Activated T-helper 1 cell treated with anti-CD3 and anti-CD28 coated beads, Interleukin-12 subunit alpha, Interleukin-12 subunit beta, Interleukin-2, Interleukin-4 antibody, amounts not matched to agents 30 ng/mL and 10 ng/mL and 1 ng/mL, durations not matched to agents 14 hours and 24 hours and 36 hours (primary cell): ENCODE measurements at regions of chr1 and their contacts with region 1.

Region 1: GRCh38 chr1:59971464-59971911 is 44.9 kb upstream of the CYP2J2 start:
- DNase-seq: peak; percentile 15
- H3K4me3 Mint-ChIP-seq: no peak overlapping the region
- H3K27ac Mint-ChIP-seq: no peak overlapping the region
- H3K4me1 Mint-ChIP-seq: peaks cover 6% of the 10 kb centered on the region
- H3K27me3 Mint-ChIP-seq: peaks cover 12% of the 10 kb centered on the region

Region 2: GRCh38 chr1:60765204-60765603 is 793.7 kb after region 1 on chr1:
- intact Hi-C with region 1: loop called (anchors 10 kb)
- DNase-seq: no peak
- H3K4me3 Mint-ChIP-seq: no peak overlapping the region
- H3K27ac Mint-ChIP-seq: no peak overlapping the region
- H3K4me1 Mint-ChIP-seq: no peaks in the 10 kb centered on the region
- H3K27me3 Mint-ChIP-seq: no peaks in the 10 kb centered on the region

Region 3: DNA sequence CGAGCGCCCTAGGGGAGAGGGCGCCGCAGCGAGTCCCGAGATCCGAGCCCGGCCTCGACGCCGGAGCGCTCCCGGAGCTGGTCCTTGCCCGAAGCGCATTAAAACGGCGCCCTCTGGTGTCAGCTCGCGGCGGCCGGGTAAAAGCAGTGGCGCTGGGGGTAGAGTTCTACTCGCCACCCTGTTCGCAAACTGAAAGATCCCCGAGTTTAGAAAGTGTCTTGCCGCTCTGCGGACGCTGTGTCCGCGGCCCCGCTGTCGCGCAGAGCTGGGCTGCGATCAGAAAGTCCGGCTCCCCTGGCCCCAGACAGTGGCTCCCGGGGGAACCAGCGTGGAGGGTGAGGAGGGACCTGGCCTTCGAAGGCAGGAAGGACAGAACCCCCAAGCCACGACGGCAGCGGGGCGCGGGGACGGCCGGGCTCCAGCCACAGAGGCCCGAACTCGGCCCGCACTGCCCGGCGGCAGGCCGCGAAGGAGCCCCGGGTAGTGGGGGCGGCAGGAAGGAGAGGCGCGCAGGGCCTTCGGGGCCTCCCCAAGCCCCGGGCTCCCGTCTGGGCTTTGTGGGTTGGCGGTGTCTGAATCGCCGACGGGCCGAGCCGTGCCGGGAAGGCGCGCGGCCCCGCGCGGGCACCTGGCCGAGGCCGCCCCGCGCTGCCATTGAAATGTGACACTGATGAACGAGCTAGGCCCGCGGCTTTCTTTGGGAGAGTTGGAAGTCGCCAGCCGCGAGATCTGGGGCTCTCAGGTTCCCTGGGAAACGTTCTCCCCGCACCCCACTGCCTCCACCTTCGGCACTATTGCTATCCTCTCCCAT is 1071.7 kb after region 1 on chr1:
- intact Hi-C with region 1: loop called (anchors 5 kb)
- DNase-seq: peak; percentile 71
- H3K4me3 Mint-ChIP-seq: peak overlapping the region; percentile 48
- H3K27ac Mint-ChIP-seq: no peak overlapping the region
- H3K4me1 Mint-ChIP-seq: no peaks in the 10 kb centered on the region
- H3K27me3 Mint-ChIP-seq: peaks cover 45% of the 10 kb centered on the region

Region 4: DNA sequence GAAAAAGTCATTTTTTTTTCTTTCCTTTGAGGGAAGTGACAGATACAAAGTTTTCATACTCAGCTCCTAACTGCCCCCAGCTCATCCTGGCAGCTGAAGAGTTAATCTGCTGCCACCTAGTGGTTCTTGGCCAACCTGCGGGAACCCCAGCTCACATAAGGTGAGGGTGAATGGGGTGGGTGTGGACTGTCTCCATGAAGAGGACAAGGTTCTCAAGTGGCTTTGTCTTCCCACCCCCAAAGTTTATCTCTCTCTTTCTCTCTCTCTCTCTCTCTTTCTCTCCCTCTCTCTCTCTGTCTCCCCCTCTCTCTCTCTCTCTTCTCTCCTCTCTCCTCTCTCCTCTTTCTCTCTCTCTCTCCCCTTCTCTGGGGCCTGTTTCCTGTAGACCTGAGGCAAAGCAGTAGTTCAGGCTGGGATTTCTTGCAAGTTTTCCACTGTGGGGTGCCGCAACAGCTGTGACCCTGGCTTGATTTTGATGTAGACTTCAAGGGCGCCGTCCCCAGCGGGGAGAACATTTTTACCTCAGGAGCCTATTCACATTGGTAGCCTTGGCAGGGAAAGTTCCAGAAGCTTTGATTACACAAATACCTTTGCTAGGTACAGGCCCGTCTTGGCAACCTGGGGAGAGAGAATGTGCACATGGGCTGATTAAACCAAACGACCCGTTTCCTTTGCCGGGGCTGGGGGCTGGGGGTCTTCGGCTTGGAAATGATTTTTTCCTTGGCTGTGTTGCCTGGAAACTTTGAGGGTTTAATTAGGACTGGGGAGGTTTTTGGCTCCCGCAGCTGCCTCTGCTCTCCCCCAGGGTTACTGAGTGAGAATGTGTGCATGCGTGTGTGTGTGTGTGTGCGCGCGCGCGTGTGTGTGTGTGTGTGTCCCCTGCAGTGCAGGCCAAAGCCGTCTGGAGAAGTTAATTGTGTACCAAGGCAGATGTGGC is 1617.5 kb after region 1 on chr1:
- intact Hi-C with region 1: loop called (anchors 10 kb)
- DNase-seq: peak; percentile 37
- H3K4me3 Mint-ChIP-seq: no peak overlapping the region
- H3K27ac Mint-ChIP-seq: no peak overlapping the region
- H3K4me1 Mint-ChIP-seq: no peaks in the 10 kb centered on the region
- H3K27me3 Mint-ChIP-seq: peaks cover 18% of the 10 kb centered on the region

Region 5: GRCh38 chr1:61851849-61852669 is 1880.6 kb after region 1 on chr1:
- intact Hi-C with region 1: loop called (anchors 5 kb)
- DNase-seq: no peak
- H3K4me3 Mint-ChIP-seq: no peak overlapping the region
- H3K27ac Mint-ChIP-seq: no peak overlapping the region
- H3K4me1 Mint-ChIP-seq: no peaks in the 10 kb centered on the region
- H3K27me3 Mint-ChIP-seq: no peaks in the 10 kb centered on the region